ENCODE measurements at regions of chr12 and their contacts with region 1.

Region 1: GRCh38 chr12:48618541-48618940 is 48.7 kb upstream of the LALBA start:
- DNase-seq: peak; percentile 41
- ATAC-seq: peak; percentile 98
- H3K4me3 ChIP-seq: no peak overlapping the region
- H3K27ac ChIP-seq: no peak overlapping the region
- H3K4me1 ChIP-seq: no peaks in the 10 kb centered on the region
- H3K27me3 ChIP-seq: no peaks in the 10 kb centered on the region; a peak in 1 of 4 replicates
- CTCF ChIP-seq: peak; percentile 94 to 99 (median 95); a peak in 5 of 6 replicates
- EP300 ChIP-seq: no peak
- POLR2A ChIP-seq: no peak
- RAD21 ChIP-seq: peak; percentile 100

Region 2: DNA sequence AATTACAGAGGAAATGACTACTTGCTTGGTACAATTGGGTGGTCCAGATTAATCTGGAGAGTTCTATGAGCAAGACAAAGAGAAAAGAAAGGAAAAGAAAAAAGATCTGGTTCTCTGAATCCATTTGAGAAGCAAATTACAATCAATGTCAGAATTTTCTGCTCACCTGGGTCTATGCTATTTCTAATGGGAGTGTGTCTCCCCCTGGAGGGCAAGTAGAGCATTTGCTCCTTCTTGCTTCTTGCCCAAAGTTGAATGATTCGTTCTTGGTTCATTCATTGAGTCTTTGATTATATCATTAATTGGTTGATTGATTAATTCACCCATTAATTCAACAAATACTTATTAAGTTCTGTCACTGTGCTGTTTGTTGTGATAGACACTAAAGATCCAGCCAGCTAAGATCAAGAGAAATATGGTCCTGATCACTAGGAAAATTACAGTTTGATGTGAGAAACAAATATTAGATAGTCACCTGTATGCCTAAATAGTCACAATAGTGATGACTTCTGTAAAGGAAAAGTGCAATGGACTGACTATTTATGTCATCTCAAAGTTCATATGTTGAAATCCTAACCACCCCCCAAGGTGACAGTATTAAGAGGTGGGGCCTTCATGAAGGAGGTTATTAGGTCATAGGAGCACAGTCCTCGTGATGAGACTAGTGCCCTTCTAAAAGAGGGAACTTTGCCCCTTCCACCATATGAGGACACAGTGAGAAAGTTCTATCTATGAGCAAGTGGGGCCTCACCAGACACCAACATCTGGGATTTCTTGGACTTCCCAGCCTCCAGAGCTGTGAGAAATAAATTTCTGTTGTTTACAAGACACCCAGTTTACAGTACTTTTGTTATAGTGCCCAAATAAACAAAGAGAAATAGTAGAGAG is 453.2 kb before region 1 on chr12:
- CTCF ChIA-PET with region 1: interaction called, 17 read pairs
- POLR2A ChIA-PET with region 1: no interaction called
- RAD21 ChIA-PET with region 1: no interaction called
- SMC1A ChIA-PET with region 1: interaction called, 7 read pairs
- in situ Hi-C with region 1: no loop called
- intact Hi-C with region 1: no loop called
- DNase-seq: peak; percentile 45
- ATAC-seq: peak; percentile 82
- H3K4me3 ChIP-seq: no peak overlapping the region
- H3K27ac ChIP-seq: no peak overlapping the region
- H3K4me1 ChIP-seq: peaks cover 4% of the 10 kb centered on the region; the same call in 1 of the 2 replicates
- H3K27me3 ChIP-seq: peaks cover 0 to 2% of the 10 kb centered on the region in 2 experiments; a peak in 2 of 4 replicates
- CTCF ChIP-seq: peak; percentile 89 to 94 (median 93)
- EP300 ChIP-seq: no peak
- POLR2A ChIP-seq: no peak
- RAD21 ChIP-seq: peak; percentile 92

Region 3: DNA sequence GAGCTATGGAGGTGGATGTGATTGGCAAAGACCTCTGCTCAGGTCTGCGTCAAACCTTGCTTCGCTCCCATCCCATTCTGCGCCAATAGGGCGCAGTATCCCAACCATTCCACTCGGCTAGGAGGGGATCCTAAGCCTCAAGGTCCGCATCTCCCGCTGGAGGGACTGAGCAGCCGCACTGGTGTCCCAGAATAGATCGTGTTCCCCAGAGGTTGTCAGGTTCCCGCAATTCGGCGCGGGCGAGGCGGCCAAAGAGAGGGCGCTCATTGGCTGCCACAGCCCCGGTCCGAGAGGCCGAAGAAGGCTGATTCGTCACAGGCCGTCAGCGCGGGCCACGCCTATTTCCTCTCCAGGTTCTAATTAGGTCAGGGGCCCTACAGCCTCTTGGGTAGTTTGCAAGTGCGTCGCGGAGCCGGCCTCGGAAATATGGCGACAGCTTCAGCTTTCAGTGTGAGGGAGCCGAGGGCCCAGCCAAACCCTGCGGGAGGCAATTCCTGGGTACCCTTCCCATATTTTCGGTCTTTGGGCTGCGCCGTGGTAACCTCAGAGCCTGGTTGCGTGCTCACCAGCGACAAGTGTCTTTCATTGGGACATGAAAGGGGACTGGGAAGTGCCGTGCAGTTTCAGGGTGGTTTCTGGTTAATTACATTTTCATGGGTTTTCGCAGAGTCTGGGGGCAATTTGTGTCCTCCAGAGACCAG is 420.4 kb before region 1 on chr12:
- CTCF ChIA-PET with region 1: interaction called, 11 read pairs
- POLR2A ChIA-PET with region 1: no interaction called
- RAD21 ChIA-PET with region 1: interaction called, 10 read pairs
- SMC1A ChIA-PET with region 1: interaction called, 9 read pairs
- in situ Hi-C with region 1: no loop called
- intact Hi-C with region 1: no loop called
- DNase-seq: peak; percentile 80
- ATAC-seq: peak; percentile 99
- H3K4me3 ChIP-seq: peak overlapping the region; percentile 86
- H3K27ac ChIP-seq: peak overlapping the region; percentile 99
- H3K4me1 ChIP-seq: 0 out of 2 replicates have a peak, but pooled peaks cover 3% of the 10 kb centered on the region
- H3K27me3 ChIP-seq: no peaks in the 10 kb centered on the region
- CTCF ChIP-seq: no peak; a peak in 1 of 6 replicates
- EP300 ChIP-seq: no peak
- POLR2A ChIP-seq: peak; percentile 99
- RAD21 ChIP-seq: no peak

Region 4: GRCh38 chr12:48286665-48287064 is 331.9 kb before region 1 on chr12:
- CTCF ChIA-PET with region 1: interaction called, 37 read pairs
- POLR2A ChIA-PET with region 1: no interaction called
- RAD21 ChIA-PET with region 1: interaction called, 12 read pairs
- SMC1A ChIA-PET with region 1: interaction called, 15 read pairs
- in situ Hi-C with region 1: no loop called
- intact Hi-C with region 1: no loop called
- DNase-seq: no peak
- ATAC-seq: peak; percentile 61
- H3K4me3 ChIP-seq: no peak overlapping the region
- H3K27ac ChIP-seq: no peak overlapping the region
- H3K4me1 ChIP-seq: no peaks in the 10 kb centered on the region
- H3K27me3 ChIP-seq: no peaks in the 10 kb centered on the region
- CTCF ChIP-seq: peak; percentile 25 to 47 (median 42); a peak in 5 of 6 replicates
- EP300 ChIP-seq: no peak
- POLR2A ChIP-seq: no peak
- RAD21 ChIP-seq: peak; percentile 49

Region 5: GRCh38 chr12:48454667-48455066 is 163.9 kb before region 1 on chr12:
- CTCF ChIA-PET with region 1: interaction called, 10 read pairs
- POLR2A ChIA-PET with region 1: no interaction called
- RAD21 ChIA-PET with region 1: no interaction called
- SMC1A ChIA-PET with region 1: interaction called, 6 read pairs
- in situ Hi-C with region 1: no loop called
- intact Hi-C with region 1: loop called (anchors 10 kb)
- DNase-seq: no peak
- ATAC-seq: no peak
- H3K4me3 ChIP-seq: no peak overlapping the region
- H3K27ac ChIP-seq: no peak overlapping the region
- H3K4me1 ChIP-seq: no peaks in the 10 kb centered on the region
- H3K27me3 ChIP-seq: no peaks in the 10 kb centered on the region
- CTCF ChIP-seq: peak in 2 of 3 experiments; percentile 13 to 25; a peak in 2 of 6 replicates
- EP300 ChIP-seq: no peak
- POLR2A ChIP-seq: no peak
- RAD21 ChIP-seq: peak; percentile 66

Region 6: GRCh38 chr12:48542300-48542928 is 76.1 kb before region 1 on chr12:
- CTCF ChIA-PET with region 1: interaction called, 250 read pairs
- POLR2A ChIA-PET with region 1: interaction called, 3 read pairs
- RAD21 ChIA-PET with region 1: interaction called, 151 read pairs
- SMC1A ChIA-PET with region 1: interaction called, 169 read pairs
- in situ Hi-C with region 1: loop called (anchors 5 kb)
- intact Hi-C with region 1: loop called (anchors 1 kb)
- DNase-seq: no peak
- ATAC-seq: peak; percentile 75
- H3K4me3 ChIP-seq: no peak overlapping the region
- H3K27ac ChIP-seq: no peak overlapping the region
- H3K4me1 ChIP-seq: 0 out of 2 replicates have a peak, but pooled peaks cover 5% of the 10 kb centered on the region
- H3K27me3 ChIP-seq: no peaks in the 10 kb centered on the region
- CTCF ChIP-seq: peak; percentile 76 to 86 (median 79)
- EP300 ChIP-seq: no peak
- POLR2A ChIP-seq: no peak
- RAD21 ChIP-seq: peak; percentile 98

Region 7: DNA sequence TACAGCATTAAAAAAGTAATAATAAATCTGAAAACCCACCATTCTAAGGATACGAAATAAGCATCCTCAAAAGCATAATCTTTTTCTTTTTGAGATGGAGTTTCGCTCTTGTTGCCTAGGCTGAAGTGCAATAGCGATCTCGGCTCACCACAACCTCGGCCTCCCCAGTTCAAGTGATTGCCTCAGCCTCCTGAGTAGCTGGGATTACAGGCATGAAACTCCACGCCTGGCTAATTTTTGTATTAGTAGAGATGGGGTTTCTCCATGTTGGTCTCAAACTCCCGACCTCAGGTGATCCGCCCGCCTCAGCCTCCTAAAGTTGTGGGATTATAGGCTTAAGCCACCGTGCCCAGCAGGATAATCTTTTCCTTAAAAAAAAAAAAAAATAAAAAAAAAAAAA is 93.7 kb after region 1 on chr12:
- CTCF ChIA-PET with region 1: no interaction called
- POLR2A ChIA-PET with region 1: no interaction called
- RAD21 ChIA-PET with region 1: no interaction called
- SMC1A ChIA-PET with region 1: no interaction called
- in situ Hi-C with region 1: no loop called
- intact Hi-C with region 1: no loop called
- DNase-seq: no peak
- ATAC-seq: no peak
- H3K4me3 ChIP-seq: no peak overlapping the region
- H3K27ac ChIP-seq: no peak overlapping the region
- H3K4me1 ChIP-seq: peaks cover 10% of the 10 kb centered on the region; the same call in 1 of the 2 replicates
- H3K27me3 ChIP-seq: no peaks in the 10 kb centered on the region
- CTCF ChIP-seq: no peak
- EP300 ChIP-seq: no peak
- POLR2A ChIP-seq: no peak
- RAD21 ChIP-seq: no peak

Region 8: DNA sequence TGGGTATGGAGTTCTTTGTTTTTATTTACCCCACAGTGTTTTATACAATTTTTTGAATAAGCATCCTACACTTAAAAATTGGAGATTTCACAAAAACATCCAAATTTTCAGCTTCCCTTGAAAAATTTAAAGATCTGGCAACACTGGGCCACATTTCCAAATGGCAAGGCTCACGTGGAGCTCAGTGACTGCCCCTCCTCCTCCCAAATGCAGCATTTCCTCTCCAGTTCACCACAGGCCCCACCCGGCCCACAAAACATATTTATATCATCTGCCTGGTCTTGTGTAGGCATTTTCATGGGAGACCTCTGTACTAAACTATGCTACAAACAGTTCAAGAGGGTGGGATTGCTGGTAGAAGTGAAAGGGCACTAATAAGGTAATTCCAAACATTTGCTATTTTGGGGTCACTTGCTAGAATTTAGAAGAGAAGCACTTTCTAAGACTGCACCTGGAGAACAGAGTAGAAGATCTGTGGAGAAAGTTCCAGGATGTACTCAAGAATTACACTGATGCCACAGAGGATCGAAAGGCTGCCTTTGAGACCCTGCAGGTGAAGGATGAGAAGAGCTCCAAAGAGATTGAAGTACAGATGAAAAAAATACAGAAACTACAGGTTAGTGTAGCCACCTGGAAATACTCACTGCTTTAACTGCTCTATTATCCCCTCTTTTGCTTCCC is 299.5 kb after region 1 on chr12:
- CTCF ChIA-PET with region 1: no interaction called
- POLR2A ChIA-PET with region 1: no interaction called
- RAD21 ChIA-PET with region 1: no interaction called
- SMC1A ChIA-PET with region 1: no interaction called
- in situ Hi-C with region 1: no loop called
- intact Hi-C with region 1: no loop called
- DNase-seq: no peak
- ATAC-seq: no peak
- H3K4me3 ChIP-seq: no peak overlapping the region
- H3K27ac ChIP-seq: no peak overlapping the region
- H3K4me1 ChIP-seq: peaks cover 7% of the 10 kb centered on the region
- H3K27me3 ChIP-seq: no peaks in the 10 kb centered on the region
- CTCF ChIP-seq: no peak
- EP300 ChIP-seq: no peak
- POLR2A ChIP-seq: no peak
- RAD21 ChIP-seq: no peak

Region 9: GRCh38 chr12:49031553-49032162 is 413.1 kb after region 1 on chr12:
- CTCF ChIA-PET with region 1: no interaction called
- POLR2A ChIA-PET with region 1: no interaction called
- RAD21 ChIA-PET with region 1: no interaction called
- SMC1A ChIA-PET with region 1: no interaction called
- in situ Hi-C with region 1: no loop called
- intact Hi-C with region 1: no loop called
- DNase-seq: no peak
- ATAC-seq: peak; percentile 19
- H3K4me3 ChIP-seq: no peak overlapping the region
- H3K27ac ChIP-seq: no peak overlapping the region
- H3K4me1 ChIP-seq: no peaks in the 10 kb centered on the region
- H3K27me3 ChIP-seq: no peaks in the 10 kb centered on the region
- CTCF ChIP-seq: no peak
- EP300 ChIP-seq: no peak
- POLR2A ChIP-seq: 0 out of 2 replicates have a peak, but pooled peaks have one; percentile 1
- RAD21 ChIP-seq: no peak

Region 10: GRCh38 chr12:49567611-49568441 is 949.3 kb after region 1 on chr12 and contains the start of gene MCRS1:
- CTCF ChIA-PET with region 1: no interaction called
- POLR2A ChIA-PET with region 1: no interaction called
- RAD21 ChIA-PET with region 1: no interaction called
- SMC1A ChIA-PET with region 1: no interaction called
- in situ Hi-C with region 1: no loop called
- intact Hi-C with region 1: no loop called
- DNase-seq: peak; percentile 80
- ATAC-seq: peak; percentile 92
- H3K4me3 ChIP-seq: peak within 1 kb of the TSS; percentile 99
- H3K27ac ChIP-seq: peak within 1 kb of the TSS; percentile 91
- H3K4me1 ChIP-seq: peaks cover 8% of the 10 kb centered on the region
- H3K27me3 ChIP-seq: no peaks in the 10 kb centered on the region
- CTCF ChIP-seq: no peak
- EP300 ChIP-seq: no peak
- POLR2A ChIP-seq: peak; percentile 98
- RAD21 ChIP-seq: no peak
- polyA plus RNA-seq, gene MCRS1: 34.3 to 52.4 TPM